ENCODE measurements at regions of chr1 and their contacts with region 1.

Region 1: GRCh38 chr1:117392771-117393170 is 25.5 kb downstream of the MAN1A2 start:
- ATAC-seq: peak in 1 of 8 experiments; percentile 38
- H3K4me3 ChIP-seq: no peak overlapping the region
- H3K27ac ChIP-seq: no peak overlapping the region
- H3K4me1 ChIP-seq: no peaks in the 10 kb centered on the region

Region 2: DNA sequence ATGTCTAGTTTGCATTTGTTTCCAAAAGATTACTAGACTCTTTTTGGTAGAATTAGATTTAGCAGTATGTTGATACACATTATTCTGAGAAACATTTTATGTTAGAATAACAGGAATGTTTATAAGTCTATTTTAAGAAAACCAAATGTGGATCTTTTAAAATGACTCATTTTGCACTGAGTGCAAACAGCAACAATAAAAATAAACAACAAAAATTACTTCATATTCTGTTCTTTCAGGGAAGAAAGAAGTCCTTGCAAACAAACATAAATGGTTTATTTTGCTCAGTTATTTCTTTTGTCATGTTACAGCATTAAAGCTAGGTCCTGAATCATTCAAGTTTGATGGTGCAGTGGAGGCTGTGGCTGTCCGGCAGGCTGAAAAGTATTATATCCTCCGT is 106.3 kb after region 1 on chr1:
- in situ Hi-C with region 1: loop called in 1 of 9 experiments (anchors 25 kb)
- ATAC-seq: no peak
- H3K4me3 ChIP-seq: no peak overlapping the region
- H3K27ac ChIP-seq: no peak overlapping the region
- H3K4me1 ChIP-seq: no peaks in the 10 kb centered on the region

Measured in motor neuron (in vitro differentiated cells).